ENCODE measurements at regions of chr20 and their contacts with region 1.

Region 1: GRCh38 chr20:1466211-1467081 is at the start of gene NSFL1C:
- DNase-seq: no peak
- H3K4me3 ChIP-seq: peak within 1 kb of the TSS; percentile 90
- CTCF ChIP-seq: peak; percentile 94

Region 2: DNA sequence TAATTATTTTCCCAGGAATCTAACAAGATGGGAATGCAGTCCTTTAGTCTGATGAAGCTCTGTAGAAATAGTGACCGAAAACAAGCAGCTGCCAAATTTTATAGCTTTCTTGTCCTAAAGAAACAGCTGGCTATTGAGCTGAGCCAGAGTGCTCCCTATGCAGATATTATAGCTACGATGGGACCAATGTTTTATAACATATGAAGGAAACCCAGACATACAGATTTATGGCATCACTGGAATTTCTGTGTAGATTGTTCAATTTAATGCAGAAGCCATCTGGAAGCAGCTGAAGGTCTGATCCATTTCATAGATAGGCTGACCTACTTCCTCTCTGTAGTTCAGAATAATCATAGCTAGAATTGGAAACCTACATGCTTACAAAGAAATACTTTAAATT is 212.2 kb before region 1 on chr20:
- CTCF ChIA-PET with region 1: no interaction called
- POLR2A ChIA-PET with region 1: no interaction called
- DNase-seq: no peak
- H3K4me3 ChIP-seq: no peak overlapping the region
- CTCF ChIP-seq: no peak

Region 3: DNA sequence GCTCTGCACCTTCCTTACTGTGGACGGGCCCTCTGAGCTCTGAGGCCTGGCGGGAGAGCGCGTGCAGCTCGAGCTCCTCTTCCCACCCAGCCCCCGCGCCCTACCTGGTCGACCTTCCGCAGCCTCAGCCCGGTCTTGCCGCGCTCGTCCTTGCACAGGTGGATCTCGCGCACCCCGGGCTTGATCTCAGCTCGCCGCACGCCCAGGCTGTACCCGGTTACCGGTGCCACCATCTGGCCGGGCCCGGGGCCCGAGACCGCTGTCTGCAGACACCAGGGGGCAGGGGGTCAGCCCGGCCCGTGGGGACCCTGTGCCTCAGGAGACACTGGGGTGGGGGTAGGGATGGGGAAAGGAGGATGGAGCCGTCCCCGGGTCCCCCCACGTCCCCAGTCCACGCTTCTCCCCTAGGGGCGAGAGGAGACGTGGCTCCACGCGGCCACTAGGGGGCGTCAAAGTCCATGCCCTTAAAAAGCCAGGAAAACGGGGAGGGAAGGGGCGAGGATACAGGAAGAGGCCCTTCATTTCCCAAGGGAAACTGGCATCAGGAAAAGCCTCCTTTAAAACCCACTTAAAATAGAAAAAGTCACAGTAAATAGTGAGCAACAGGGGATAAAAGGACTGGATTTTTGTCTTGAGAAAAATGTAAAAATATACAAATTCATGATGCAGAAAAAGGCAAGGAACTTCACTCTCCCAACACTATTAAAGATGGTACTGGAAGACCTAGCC is 153.0 kb before region 1 on chr20:
- CTCF ChIA-PET with region 1: interaction called, 30 read pairs
- POLR2A ChIA-PET with region 1: no interaction called
- DNase-seq: no peak
- H3K4me3 ChIP-seq: peak overlapping the region; percentile 53
- CTCF ChIP-seq: peak; percentile 92

Region 4: GRCh38 chr20:1325173-1326030 is 141.0 kb before region 1 on chr20:
- CTCF ChIA-PET with region 1: interaction called, 11 read pairs
- POLR2A ChIA-PET with region 1: no interaction called
- DNase-seq: peak; percentile 68
- H3K4me3 ChIP-seq: peak overlapping the region; percentile 90
- CTCF ChIP-seq: peak; percentile 39

Region 5: GRCh38 chr20:1368448-1369199 is 97.8 kb before region 1 on chr20:
- CTCF ChIA-PET with region 1: no interaction called
- POLR2A ChIA-PET with region 1: no interaction called
- DNase-seq: no peak
- H3K4me3 ChIP-seq: no peak overlapping the region
- CTCF ChIP-seq: no peak

Region 6: GRCh38 chr20:1402149-1402548 is 64.3 kb before region 1 on chr20:
- CTCF ChIA-PET with region 1: no interaction called
- POLR2A ChIA-PET with region 1: no interaction called
- DNase-seq: no peak
- H3K4me3 ChIP-seq: no peak overlapping the region
- CTCF ChIP-seq: no peak

Region 7: DNA sequence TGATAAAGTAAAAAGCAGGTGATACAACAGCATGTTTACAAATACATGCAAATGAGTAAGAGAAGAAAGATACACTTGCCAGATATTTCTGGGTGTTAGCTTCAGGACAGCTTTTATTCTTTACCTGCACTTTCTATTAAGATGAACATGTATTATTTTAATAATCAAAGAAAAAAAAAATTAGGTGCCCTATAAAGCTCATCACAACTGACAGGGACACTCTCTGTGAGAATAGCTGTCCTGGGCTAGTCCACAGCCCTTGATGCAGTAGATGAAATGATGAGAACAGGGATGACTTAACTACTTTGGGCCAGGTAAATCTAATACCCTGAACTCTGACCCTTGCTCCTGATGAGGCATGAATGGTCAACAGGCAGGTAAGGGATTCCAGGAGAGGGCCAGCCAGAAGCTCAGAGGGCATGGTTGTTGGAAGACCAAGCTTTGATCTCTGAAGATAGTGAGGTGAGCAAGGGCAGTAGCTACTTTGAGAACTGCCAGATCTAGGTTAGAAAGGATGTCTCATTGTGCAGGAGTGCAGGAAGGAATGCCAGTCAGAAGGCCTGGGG is 15.4 kb before region 1 on chr20:
- CTCF ChIA-PET with region 1: interaction called, 120 read pairs
- POLR2A ChIA-PET with region 1: interaction called, 3 read pairs
- DNase-seq: no peak
- H3K4me3 ChIP-seq: no peak overlapping the region
- CTCF ChIP-seq: no peak

Region 8: DNA sequence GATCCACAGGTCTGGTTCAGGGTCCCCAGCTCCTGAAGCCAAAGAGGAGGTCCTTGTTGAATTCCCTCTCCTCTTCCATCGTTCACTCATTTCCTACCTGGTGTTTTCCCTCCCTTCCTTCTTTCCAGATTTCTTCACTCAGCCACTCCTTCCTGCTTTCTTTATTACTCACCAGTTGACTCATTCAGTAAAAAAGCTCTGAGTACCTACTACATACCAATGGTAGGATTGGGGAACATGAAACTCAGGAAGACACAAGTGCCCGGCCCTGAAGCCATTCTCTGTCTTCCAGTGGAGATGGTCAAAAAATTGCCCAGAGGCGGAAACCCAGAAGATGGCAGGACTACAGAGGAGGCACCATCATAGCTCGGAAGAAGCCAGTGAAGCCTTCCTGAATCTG is 12.1 kb after region 1 on chr20:
- CTCF ChIA-PET with region 1: interaction called, 11 read pairs
- POLR2A ChIA-PET with region 1: no interaction called
- DNase-seq: no peak
- H3K4me3 ChIP-seq: no peak overlapping the region
- CTCF ChIP-seq: no peak